ENCODE measurements at regions of chr1 and their contacts with region 1.

Region 1: GRCh38 chr1:219189021-219189824 is 15.5 kb downstream of the LYPLAL1 start:
- DNase-seq: peak; percentile 96
- H3K4me3 ChIP-seq: peak overlapping the region in 1 of 3 experiments; percentile 21
- H3K27ac ChIP-seq: peak overlapping the region; percentile 70
- H3K4me1 ChIP-seq: peaks cover 26% of the 10 kb centered on the region
- H3K27me3 ChIP-seq: no peaks in the 10 kb centered on the region
- CTCF ChIP-seq: no peak
- POLR2A ChIP-seq: no peak

Region 2: DNA sequence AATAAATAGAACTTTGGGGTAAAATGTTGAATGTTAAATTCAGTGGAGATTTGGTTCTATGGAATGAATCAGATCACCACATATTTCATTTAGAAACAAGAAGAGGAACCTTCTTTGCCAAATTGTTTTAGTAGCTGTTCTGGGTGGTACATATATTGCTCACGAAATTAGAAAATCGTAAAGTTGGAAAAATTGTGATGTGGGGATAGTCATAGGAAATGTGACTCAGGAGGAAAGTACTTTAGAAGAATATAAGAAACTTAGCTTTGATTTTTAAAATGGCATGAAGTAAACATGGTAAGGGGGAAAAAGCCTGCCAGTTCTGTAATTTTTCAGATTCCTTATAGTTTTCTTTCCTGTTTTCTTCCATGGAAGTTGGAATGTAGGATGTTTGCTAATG is 876.7 kb before region 1 on chr1:
- CTCF ChIA-PET with region 1: no interaction called
- POLR2A ChIA-PET with region 1: no interaction called
- dilution Hi-C with region 1: no loop called
- intact Hi-C with region 1: loop called (anchors 10 kb)
- DNase-seq: peak; percentile 74
- H3K4me3 ChIP-seq: peak overlapping the region in 1 of 3 experiments; percentile 76
- H3K27ac ChIP-seq: peak overlapping the region; percentile 84
- H3K4me1 ChIP-seq: peaks cover 20% of the 10 kb centered on the region
- H3K27me3 ChIP-seq: no peaks in the 10 kb centered on the region
- CTCF ChIP-seq: no peak
- POLR2A ChIP-seq: no peak

Region 3: DNA sequence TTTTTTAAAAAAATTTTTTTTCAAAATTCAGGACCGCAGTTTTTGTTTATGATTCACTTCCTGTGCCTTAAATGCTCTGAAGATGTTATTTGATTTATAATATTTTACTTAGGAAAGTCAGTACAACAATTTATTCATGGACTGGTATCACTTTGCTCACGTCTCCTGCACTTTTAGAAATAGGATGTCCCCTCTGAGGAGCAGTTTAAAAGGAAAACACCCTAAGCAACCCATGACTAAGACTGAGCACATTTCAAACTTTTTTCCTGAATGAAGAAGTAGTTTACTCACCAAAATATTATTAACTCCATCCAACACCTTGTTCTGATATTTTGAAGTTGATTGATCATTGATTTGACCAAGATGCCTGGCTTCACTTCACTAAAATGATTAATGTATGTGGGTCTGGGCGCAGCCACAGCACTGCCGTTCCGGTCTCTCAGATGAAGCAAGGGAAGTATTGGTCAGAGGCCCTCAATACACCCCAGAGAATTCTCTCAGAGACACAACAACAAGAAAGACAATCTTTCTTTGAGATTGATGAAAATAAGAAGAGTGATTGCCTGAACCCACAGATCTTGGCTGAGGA is 620.2 kb before region 1 on chr1:
- CTCF ChIA-PET with region 1: no interaction called
- POLR2A ChIA-PET with region 1: no interaction called
- dilution Hi-C with region 1: no loop called
- intact Hi-C with region 1: no loop called
- DNase-seq: peak; percentile 10
- H3K4me3 ChIP-seq: no peak overlapping the region
- H3K27ac ChIP-seq: no peak overlapping the region
- H3K4me1 ChIP-seq: peaks cover 6% of the 10 kb centered on the region
- H3K27me3 ChIP-seq: no peaks in the 10 kb centered on the region
- CTCF ChIP-seq: no peak
- POLR2A ChIP-seq: no peak

Region 4: DNA sequence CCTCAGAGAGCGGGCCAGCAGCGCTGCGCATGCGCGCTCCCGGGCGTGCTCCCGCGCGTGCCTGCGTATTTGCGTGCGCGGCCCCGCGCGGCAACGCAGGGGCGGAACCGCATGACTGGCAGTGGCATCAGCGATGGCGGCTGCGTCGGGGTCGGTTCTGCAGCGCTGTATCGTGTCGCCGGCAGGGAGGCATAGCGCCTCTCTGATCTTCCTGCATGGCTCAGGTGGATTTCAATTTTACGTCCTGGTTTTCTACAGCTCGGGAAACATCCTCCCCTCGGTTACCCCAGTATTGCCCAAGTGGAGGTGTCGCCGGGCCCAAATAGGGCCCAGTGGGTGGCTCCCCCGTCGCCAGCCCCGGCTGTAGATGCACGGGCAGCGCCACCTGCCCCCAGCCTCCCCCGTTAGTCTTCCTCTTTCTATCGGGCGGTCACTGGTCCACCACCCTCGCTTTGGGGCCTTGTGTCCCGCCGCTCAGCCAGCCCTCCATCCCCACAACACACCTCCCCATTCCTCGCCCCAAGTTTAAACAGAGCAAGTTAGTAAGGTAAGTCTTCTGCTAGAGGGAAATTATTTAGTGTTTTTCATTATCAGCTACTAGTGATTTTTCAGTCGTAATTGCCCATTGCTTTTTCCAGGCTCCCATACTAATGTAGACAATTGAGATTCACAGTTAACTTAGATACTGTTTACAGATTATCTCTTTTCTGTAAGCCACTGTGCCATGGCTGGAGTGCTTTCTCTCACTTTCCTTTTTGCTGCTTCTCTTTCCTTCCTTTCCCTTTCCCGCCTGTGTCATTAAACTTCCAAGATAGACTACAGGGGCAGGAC is 15.2 kb before region 1 on chr1 and contains the start of gene LYPLAL1:
- CTCF ChIA-PET with region 1: interaction called, 8 read pairs
- POLR2A ChIA-PET with region 1: interaction called, 5 read pairs
- dilution Hi-C with region 1: no loop called
- intact Hi-C with region 1: loop called (anchors 1 kb)
- DNase-seq: peak; percentile 92
- H3K4me3 ChIP-seq: peak within 1 kb of the TSS; percentile 78 to 90 (median 86)
- H3K27ac ChIP-seq: peak within 1 kb of the TSS; percentile 80
- H3K4me1 ChIP-seq: peaks cover 15% of the 10 kb centered on the region
- H3K27me3 ChIP-seq: no peaks in the 10 kb centered on the region
- CTCF ChIP-seq: peak in 1 of 2 donors; percentile 7
- POLR2A ChIP-seq: peak; percentile 97
- total RNA-seq, gene LYPLAL1: 19.1 and 25.4 TPM in 2 replicates

Region 5: GRCh38 chr1:219201656-219202055 is 12.4 kb after region 1 on chr1:
- CTCF ChIA-PET with region 1: interaction called, 4 read pairs
- POLR2A ChIA-PET with region 1: no interaction called
- dilution Hi-C with region 1: no loop called
- intact Hi-C with region 1: loop called (anchors 2 kb)
- DNase-seq: no peak
- H3K4me3 ChIP-seq: no peak overlapping the region
- H3K27ac ChIP-seq: no peak overlapping the region
- H3K4me1 ChIP-seq: no peaks in the 10 kb centered on the region
- H3K27me3 ChIP-seq: no peaks in the 10 kb centered on the region
- CTCF ChIP-seq: no peak
- POLR2A ChIP-seq: no peak

Region 6: DNA sequence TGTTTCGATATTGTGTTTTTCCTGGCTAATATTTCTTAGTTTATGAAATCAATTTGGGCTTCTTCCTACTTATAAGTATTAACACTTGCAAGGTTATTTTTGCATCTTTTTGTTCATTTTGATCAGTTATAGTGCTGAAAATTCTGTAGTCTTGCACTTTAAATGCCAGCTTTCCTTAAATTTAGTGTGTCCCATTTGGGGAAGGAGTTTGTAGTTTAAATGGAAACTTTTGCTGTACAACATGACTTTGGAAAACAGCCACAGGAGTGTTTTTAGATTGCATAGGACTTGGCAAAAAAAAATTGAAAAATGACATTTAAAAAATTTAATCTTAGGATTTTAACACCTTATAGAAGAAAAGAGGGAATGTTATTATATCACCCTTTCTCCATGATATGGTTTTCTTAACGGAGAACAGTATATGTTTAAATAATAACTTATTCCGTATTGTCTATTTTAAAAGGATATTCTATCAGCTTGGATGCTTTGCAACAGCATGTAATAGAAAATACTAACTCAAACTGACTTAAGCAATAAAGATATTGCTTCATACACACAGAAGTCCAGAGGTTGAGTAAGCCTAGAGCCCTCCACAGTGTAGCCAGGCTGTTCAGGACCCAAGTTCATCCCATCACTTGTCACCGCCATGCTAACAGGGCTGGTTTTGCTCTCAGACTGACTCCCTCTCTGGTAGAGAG is 38.3 kb after region 1 on chr1:
- CTCF ChIA-PET with region 1: no interaction called
- POLR2A ChIA-PET with region 1: no interaction called
- dilution Hi-C with region 1: no loop called
- intact Hi-C with region 1: no loop called
- DNase-seq: no peak
- H3K4me3 ChIP-seq: no peak overlapping the region
- H3K27ac ChIP-seq: no peak overlapping the region
- H3K4me1 ChIP-seq: no peaks in the 10 kb centered on the region
- H3K27me3 ChIP-seq: no peaks in the 10 kb centered on the region
- CTCF ChIP-seq: no peak
- POLR2A ChIP-seq: no peak

Region 7: DNA sequence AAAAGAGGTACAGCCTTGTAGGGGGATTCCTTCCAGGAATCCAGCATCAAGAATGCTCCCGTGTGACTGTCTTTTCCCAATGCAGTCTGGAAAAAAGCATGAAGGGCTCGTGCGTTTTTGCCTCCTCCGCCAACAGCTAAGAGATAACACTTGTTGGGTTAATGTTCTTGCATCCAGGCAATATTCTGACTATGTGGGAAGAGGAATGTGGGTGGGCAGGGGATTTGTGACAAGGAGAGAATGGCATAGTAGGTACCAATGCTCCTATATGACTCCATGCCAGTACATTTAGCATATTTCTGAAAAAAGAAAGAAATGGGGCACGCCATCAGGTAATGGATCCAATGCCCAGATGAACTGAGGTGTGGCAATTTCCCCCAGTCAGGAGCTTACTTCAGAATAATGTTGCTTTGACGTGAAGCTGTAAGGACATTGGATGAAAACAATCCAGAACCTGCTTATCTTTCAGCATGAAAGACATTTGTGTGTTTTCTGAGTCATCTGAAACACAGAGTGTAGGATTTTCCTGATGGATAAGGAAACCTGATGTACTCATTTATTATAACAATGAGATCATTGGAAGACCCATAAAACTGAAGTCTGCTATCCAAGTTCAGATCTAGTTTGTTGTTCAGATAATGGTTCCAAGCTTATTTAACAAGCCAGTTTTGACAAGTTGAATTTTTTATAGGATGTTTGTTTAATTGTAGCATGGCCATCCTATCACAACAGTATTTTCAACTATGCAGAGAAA is 90.0 kb after region 1 on chr1:
- CTCF ChIA-PET with region 1: no interaction called
- POLR2A ChIA-PET with region 1: no interaction called
- dilution Hi-C with region 1: no loop called
- intact Hi-C with region 1: loop called (anchors 1 kb)
- DNase-seq: peak; percentile 87
- H3K4me3 ChIP-seq: no peak overlapping the region
- H3K27ac ChIP-seq: peak overlapping the region; percentile 64
- H3K4me1 ChIP-seq: peaks cover 28% of the 10 kb centered on the region
- H3K27me3 ChIP-seq: no peaks in the 10 kb centered on the region
- CTCF ChIP-seq: no peak
- POLR2A ChIP-seq: no peak

Region 8: GRCh38 chr1:219324629-219325367 is 135.6 kb after region 1 on chr1:
- CTCF ChIA-PET with region 1: interaction called, 3 read pairs
- POLR2A ChIA-PET with region 1: no interaction called
- dilution Hi-C with region 1: no loop called
- intact Hi-C with region 1: loop called (anchors 5 kb)
- DNase-seq: peak; percentile 83
- H3K4me3 ChIP-seq: no peak overlapping the region
- H3K27ac ChIP-seq: peak overlapping the region; percentile 78
- H3K4me1 ChIP-seq: peaks cover 44% of the 10 kb centered on the region
- H3K27me3 ChIP-seq: no peaks in the 10 kb centered on the region
- CTCF ChIP-seq: no peak
- POLR2A ChIP-seq: peak; percentile 63

Measured in endothelial cell of umbilical vein (primary cell).